ENCODE measurements at regions of chr12 and their contacts with region 1.

Region 1: GRCh38 chr12:5522432-5523335 is 90.8 kb downstream of the NTF3 start:
- DNase-seq: no peak

Region 2: DNA sequence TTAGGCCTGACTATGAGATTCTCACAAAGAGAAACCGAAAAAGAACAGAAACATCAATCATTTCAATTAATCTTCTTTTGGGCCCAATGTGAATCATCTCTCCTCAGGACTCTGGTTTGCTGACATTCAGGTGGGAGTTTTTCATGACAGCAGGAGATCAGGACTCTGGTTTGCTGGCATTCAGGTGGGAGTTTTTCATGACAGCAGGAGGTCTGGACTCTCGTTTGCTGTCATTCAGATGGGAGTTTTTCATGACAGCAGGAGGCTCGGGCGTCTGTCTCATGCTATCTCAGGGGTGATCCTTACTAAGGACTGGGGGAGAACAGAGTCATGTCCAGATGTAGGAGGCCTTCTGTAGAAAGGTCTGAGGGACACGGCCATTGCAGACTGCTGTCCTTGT is 1609.4 kb before region 1 on chr12:
- intact Hi-C with region 1: loop called in 1 of 2 experiments (anchors 10 kb)
- DNase-seq: no peak

Region 3: GRCh38 chr12:5364036-5364770 is 158.5 kb before region 1 on chr12:
- intact Hi-C with region 1: no loop called
- DNase-seq: no peak

Region 4: DNA sequence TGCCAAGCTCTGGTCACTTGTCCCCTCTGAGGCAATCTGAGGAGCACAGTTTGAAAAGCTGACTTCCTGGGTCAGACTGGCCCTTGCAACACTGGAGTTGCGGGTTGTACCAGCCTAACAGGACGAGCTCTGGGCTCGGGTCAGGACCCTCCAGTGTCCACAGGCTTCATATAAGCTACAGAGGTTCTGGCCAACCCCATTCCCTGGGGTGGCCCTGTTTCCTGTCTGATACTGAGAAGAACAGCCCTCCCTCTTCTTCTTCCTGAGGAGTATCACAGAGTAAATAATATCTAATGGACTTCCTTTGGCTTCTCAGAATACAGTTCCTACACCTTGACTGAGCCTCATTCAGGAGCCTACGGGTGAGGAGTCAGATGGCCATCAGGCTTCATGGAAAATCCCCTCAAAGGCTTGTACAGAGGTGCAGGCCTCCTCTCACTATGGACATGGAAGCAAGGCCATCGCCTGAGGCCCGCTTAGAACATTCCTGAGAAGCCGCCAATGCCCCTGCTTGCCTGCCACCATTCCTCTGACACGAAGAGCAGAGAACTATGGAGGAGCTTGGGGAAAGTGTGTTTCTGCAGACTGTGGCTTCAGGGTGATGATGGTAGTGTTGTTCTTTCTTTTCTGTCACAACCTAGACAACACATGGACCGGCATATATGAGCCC is 450.9 kb after region 1 on chr12:
- intact Hi-C with region 1: no loop called
- DNase-seq: no peak

Region 5: GRCh38 chr12:7344833-7345606 is 1822.3 kb after region 1 on chr12:
- intact Hi-C with region 1: no loop called
- DNase-seq: no peak